Pancreas (tissue), 10 donors: ENCODE measurements at regions of chr19 and their contacts with region 1.

Region 1: DNA sequence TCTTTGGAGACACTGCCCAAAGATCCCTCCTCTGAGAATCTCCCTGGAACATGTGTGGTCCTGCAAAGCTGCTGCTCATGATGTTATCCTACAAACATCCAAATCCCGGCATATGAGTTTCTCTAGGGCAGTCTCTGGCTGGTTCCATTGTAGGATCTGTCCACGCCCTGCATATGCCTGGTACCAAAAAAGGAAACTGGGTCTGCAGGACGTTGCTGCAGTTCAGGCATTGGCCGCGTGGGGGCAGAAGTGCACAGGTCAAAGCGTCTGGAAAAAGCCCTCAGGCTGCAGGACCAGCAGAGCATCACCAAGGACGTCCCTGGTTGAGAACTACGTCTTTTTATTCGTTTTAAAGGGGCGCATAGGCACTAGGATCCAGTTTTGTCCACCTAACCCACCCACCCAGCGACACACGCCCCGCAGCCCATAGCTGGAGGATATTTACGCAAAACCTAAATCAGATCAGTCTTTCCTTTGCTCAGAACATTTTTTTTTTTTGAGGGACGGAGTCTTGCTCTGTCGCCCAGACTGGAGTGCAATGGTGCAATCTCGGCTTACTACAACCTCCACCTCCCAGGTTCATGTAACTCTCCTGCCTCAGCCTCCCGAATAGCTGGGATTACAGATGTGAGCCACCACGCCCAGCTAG is 12.9 kb upstream of the ZNF564 start:
- DNase-seq: peak; percentile 66 to 98 (median 88)
- ATAC-seq: peak; percentile 76 to 100 (median 98)
- H3K4me3 ChIP-seq: no peak overlapping the region
- H3K27ac ChIP-seq: no peak overlapping the region
- H3K4me1 ChIP-seq: no peaks in the 10 kb centered on the region
- H3K27me3 ChIP-seq: no peaks in the 10 kb centered on the region
- CTCF ChIP-seq: peak; percentile 76 to 90 (median 90)

Region 2: DNA sequence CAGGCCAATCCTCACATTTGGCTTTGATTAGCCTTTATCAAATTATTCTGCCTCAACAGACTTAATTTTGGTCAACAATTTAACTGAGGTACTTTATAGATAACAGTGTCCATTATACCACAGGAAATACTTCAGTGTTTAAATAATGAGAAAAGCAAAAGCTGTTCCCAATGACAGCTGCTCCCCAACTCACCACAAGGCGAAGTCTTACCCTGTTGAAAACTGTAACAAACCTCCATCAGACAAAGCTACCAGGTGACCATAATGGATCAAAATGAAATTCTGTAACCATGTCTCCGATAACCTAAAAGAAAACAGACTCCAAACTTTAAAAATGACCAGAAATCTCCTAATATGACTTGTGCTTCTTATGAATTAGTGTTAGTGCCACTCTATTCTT is 319.8 kb before region 1 on chr19:
- intact Hi-C with region 1: no loop called
- DNase-seq: no peak
- ATAC-seq: no peak
- H3K4me3 ChIP-seq: no peak overlapping the region
- H3K27ac ChIP-seq: no peak overlapping the region
- H3K4me1 ChIP-seq: no peaks in the 10 kb centered on the region
- H3K27me3 ChIP-seq: no peaks in the 10 kb centered on the region
- CTCF ChIP-seq: no peak

Region 3: DNA sequence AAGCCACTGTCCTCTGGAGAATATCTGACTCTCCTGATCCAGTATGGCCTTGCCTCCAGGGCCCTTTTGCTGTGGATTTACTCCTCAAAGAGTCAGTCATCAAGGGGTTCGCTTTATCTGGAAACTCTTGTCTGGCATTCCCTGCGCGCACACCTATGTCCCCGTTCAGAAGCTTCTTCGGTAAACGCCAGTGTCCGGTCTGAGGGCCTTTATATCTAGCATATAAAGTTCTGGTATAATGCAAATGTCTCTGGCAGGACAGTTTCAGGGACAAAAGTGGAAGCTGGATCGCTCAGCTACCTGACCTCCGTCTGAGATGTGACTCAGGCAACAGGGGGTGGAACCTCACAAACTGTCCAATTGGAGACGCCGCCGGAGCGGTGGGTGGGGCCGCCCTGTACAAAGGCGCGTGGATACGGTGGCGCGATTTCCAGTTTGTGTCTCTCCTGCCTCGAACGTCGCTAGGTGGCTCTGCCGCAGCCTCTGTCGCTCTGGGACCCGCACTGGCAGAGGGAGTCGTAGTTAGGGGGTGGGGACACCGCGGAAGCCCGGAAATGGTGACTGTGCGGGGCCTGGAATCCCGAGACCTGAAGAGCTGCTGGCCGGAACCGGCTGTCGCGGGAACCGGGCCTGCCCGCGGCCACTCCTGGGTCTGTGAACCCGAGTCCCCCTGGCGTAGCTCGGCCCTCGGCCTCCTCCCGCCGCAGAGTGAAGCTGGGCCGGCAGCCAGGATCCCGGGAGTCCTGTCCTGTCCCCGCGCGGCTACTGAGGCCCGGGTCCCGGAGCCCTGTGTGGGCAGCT is 68.9 kb before region 1 on chr19:
- intact Hi-C with region 1: no loop called
- DNase-seq: peak; percentile 93 to 98 (median 96)
- ATAC-seq: peak; percentile 99 to 100 (median 99)
- H3K4me3 ChIP-seq: peak overlapping the region; percentile 41 to 59 (median 50)
- H3K27ac ChIP-seq: peak overlapping the region; percentile 72 to 94 (median 90)
- H3K4me1 ChIP-seq: no peaks in the 10 kb centered on the region
- H3K27me3 ChIP-seq: no peaks in the 10 kb centered on the region
- CTCF ChIP-seq: no peak

Region 4: GRCh38 chr19:12669270-12670158 is 105.4 kb after region 1 on chr19:
- intact Hi-C with region 1: loop called in 2 of 3 experiments (anchors 5 to 10 kb)
- DNase-seq: peak; percentile 73 to 90 (median 80)
- ATAC-seq: peak; percentile 74 to 81 (median 80)
- H3K4me3 ChIP-seq: peak overlapping the region; percentile 76 to 96 (median 94)
- H3K27ac ChIP-seq: peak overlapping the region; percentile 82 to 97 (median 94)
- H3K4me1 ChIP-seq: peaks cover 4 to 29% (median 7%) of the 10 kb centered on the region in 3 donors
- H3K27me3 ChIP-seq: no peaks in the 10 kb centered on the region
- CTCF ChIP-seq: no peak